Activated naive CD4-positive, alpha-beta T cell treated with anti-CD3 and anti-CD28 coated beads for 36 hours (primary cell): ENCODE measurements at regions of chr16 and their contacts with region 1.

Region 1: DNA sequence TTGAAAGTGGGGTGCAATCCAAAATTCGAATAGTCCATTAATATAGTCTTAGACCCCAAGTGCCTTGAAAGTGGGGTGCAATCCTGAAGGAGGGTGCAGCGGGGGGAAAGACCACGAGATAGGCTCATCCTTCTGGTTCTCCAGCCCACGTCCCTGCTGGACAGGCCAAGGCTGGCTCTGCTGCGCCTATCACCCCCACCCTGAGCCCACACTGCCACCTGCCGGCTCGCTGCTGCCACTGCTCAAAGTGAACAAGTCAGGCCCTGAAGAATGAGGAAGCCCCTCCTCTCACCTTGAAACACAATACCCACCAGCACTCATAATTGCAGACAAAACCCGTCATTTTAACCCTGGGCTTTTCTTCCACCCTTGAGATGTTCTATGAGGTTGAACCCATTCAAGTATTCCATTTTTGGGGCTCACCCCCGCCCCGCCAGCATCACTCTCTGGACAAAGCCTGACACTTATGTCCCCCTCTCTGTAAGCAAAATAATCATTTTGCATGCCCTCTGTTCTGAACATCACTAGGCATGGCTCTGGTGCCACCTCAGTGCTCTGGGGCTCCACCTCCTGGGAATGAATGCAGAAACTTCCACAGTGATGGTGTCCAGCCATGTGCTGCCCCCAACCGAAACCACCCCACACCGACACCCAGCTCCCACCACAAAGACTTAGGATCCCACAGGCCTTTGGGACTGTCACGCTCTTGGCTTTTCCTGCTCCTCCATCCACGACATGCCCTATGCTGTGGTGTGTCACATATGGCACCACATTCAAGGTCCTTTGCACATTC is 56.8 kb downstream of the BEAN1 start:
- DNase-seq: peak; percentile 86
- H3K4me3 Mint-ChIP-seq: no peak overlapping the region
- H3K27ac Mint-ChIP-seq: peak overlapping the region; percentile 33
- H3K4me1 Mint-ChIP-seq: peaks cover 22% of the 10 kb centered on the region
- H3K27me3 Mint-ChIP-seq: no peaks in the 10 kb centered on the region

Region 2: DNA sequence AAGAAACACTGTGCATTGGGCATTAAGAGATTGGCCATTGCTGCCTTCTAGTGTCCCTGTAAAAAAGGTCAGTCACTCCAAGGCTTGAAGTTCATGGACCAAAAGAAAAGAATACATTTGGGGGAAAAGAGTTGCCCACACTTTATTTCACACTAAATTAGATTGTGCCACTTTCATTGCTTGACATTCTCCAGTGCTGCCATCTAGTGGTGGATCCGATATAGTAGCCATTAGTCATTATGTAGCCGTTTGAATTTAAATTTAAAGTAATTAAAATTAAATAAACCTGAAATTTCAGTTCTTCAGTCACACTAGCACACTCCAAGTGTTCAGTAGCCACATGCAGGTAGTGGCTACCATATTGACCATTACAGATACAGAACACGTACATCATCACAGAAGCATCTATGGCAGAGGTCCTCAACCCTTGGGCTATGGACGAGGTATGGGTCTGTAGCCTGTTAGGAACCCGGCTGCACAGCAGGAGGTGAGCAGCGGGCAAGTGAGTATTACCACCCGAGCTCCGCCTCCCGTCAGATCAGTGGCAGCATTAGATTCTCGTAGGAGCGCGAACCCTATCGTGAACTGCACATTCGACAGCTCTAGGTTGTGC is 139.2 kb before region 1 on chr16:
- CTCF ChIA-PET with region 1: no interaction called
- intact Hi-C with region 1: loop called (anchors 5 kb)
- DNase-seq: peak; percentile 62
- H3K4me3 Mint-ChIP-seq: no peak overlapping the region
- H3K27ac Mint-ChIP-seq: no peak overlapping the region
- H3K4me1 Mint-ChIP-seq: no peaks in the 10 kb centered on the region
- H3K27me3 Mint-ChIP-seq: peaks cover 31% of the 10 kb centered on the region

Region 3: DNA sequence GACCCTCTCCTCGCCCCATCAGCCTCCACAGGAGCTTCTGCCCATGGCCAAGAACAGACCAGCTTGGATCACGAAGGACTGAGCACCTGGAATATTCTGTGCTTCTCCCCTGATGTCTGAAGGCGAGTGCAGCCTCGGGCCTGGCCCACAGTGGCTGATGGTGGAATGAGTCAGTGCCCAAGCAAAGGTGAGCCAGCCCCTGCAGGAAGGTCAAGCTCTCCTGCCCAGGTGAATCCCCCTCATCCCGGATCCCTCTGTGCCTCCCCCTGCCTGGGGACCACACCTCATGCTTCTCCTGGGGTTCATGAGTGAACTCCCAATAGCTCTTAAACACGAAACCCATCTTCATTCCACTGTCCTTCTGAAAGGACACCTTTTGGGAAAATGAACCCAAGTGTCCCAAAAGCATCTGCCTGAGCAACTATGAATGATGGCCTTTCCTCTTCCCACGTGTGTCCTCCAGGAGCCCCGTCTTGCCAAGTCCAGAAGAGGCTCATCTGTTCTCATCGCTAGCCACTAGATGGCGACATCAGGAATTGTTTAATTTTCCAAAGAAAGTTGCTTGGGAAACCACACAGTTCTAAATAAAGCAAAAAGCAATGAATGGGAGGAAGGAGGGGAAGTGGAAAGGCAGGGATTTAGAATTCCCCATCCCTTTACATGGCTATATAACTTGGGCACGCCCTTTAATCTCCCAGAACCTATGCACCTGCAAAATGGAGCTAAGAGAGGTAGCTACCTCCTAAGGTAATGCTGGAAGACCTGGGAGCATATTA is 126.5 kb before region 1 on chr16:
- CTCF ChIA-PET with region 1: interaction called, 6 read pairs
- intact Hi-C with region 1: loop called (anchors 1 kb)
- DNase-seq: peak; percentile 47
- H3K4me3 Mint-ChIP-seq: no peak overlapping the region
- H3K27ac Mint-ChIP-seq: no peak overlapping the region
- H3K4me1 Mint-ChIP-seq: no peaks in the 10 kb centered on the region
- H3K27me3 Mint-ChIP-seq: peaks cover 29% of the 10 kb centered on the region

Region 4: DNA sequence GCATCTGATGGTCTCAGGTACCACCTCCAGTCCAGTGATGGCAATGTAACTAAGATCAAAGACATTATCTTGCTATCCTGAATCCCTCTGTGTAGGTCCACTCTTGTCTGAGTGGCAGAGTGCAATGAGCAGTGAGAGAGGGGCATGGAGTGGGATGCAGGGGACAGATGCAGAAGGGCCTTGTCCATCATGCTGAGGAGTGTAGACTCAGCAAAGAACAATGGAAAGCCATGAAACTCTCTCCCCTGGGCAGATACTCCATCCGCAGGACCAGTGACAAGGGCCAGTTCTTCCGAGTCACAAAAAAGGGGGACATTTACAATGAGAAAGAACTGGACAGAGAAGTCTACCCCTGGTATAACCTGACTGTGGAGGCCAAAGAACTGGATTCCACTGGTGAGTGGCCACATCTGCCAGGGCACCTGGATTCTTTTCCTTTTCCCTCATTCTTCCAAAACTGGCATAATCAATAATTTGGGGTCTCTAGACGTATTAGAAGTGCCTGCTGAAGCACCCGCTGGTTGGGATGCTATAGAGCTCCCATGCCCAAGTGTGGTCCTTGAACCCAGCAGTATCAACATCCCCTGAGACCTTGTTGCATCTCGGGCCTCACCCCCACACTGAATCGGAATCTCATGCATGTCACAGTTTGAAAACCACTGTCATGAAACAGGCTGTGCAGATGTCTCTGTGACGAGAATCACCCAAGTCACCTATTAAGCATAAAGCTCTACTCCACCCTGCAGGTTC is 87.9 kb before region 1 on chr16:
- CTCF ChIA-PET with region 1: no interaction called
- intact Hi-C with region 1: no loop called
- DNase-seq: no peak
- H3K4me3 Mint-ChIP-seq: no peak overlapping the region
- H3K27ac Mint-ChIP-seq: no peak overlapping the region
- H3K4me1 Mint-ChIP-seq: no peaks in the 10 kb centered on the region
- H3K27me3 Mint-ChIP-seq: no peaks in the 10 kb centered on the region

Region 5: DNA sequence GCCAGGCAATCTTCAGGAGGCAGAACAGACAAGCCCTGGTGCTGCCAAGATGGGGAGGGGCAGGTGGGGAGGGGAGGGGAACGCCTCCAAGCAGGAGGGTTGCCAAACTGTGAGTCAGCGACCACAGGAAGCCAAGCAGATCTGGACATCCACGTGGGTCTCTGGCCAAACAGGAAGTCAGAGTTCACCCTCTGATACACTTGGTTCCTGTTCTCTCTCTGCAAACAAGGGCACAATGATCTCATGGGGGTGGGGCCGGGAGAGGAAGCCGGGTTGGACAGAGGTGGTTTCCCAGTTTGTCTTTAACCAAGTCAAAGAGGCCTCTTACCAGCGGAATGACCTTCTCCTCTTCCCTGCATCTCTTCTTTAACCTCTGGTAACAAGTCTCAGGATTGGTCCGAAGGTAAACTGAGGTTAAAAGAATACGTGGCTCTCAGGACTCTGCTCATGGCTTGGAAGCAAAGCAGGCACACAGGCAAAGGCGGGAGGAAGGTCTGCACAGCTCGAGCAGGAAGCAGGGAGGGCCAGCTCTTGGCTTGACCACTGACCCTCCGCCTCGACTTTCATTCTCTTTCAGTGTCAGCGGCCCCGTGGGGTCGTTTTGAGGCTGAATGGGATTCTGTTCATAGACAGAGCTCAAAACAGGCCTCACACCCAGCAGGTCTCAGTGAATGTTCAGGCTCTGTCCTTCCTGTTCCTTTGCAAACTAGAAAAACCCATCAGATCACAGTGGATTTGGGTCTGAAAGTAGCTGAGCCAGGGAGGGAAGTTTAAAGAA is 33.1 kb after region 1 on chr16:
- CTCF ChIA-PET with region 1: interaction called, 4 read pairs
- intact Hi-C with region 1: loop called (anchors 2 kb)
- DNase-seq: peak; percentile 96
- H3K4me3 Mint-ChIP-seq: peak overlapping the region; percentile 68
- H3K27ac Mint-ChIP-seq: peak overlapping the region; percentile 93
- H3K4me1 Mint-ChIP-seq: peaks cover 60% of the 10 kb centered on the region
- H3K27me3 Mint-ChIP-seq: no peaks in the 10 kb centered on the region